Heart left ventricle (tissue), 16 donors: ENCODE measurements at regions of chr16 and their contacts with region 1.

Region 1: DNA sequence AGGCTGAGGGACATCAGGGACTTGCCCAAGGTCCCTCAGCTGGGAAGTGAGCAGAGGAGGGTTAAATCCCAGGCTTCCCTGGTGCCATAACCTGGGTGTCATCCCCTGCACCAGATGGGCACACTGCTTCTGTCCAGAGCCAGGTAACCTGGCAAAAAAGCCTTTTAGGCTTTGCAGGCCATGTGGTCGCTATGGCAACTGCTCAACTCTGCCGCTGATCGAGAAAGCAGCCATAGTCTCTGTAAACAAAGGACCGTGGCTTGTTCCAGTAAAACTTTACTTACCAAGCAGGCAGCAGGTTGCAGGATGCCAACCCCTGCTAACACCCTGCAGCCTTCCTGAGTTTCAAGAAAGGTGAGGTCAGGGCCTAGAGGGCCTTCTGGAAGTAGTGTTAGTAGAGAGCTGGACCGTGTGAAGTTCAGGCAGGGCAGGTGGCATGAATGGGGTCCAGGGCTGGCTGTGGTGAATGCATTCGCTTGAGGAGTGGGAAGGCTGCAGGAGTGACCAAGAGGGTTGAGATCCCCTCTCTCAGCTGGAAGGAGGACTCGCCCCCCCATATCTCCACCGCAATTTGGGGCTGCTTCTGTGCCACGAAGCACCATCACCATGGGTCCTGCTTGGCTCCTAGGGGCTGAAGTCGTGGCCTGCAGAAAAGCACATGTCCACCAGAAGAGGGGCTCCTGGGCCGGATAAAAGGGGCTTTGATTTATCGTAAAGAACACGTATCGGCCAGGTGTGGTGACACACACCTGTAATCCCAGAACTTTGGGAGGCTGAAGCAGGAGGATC is 91.3 kb downstream of the SOCS1 start:
- DNase-seq: peak in 1 of 5 donors; percentile 11
- ATAC-seq: no peak
- H3K4me3 ChIP-seq: no peak overlapping the region
- H3K27ac ChIP-seq: no peak overlapping the region
- H3K4me1 ChIP-seq: peaks cover 0 to 40% (median 22%) of the 10 kb centered on the region in 12 donors
- H3K27me3 ChIP-seq: no peaks in the 10 kb centered on the region
- CTCF ChIP-seq: no peak
- POLR2A ChIP-seq: no peak

Region 2: DNA sequence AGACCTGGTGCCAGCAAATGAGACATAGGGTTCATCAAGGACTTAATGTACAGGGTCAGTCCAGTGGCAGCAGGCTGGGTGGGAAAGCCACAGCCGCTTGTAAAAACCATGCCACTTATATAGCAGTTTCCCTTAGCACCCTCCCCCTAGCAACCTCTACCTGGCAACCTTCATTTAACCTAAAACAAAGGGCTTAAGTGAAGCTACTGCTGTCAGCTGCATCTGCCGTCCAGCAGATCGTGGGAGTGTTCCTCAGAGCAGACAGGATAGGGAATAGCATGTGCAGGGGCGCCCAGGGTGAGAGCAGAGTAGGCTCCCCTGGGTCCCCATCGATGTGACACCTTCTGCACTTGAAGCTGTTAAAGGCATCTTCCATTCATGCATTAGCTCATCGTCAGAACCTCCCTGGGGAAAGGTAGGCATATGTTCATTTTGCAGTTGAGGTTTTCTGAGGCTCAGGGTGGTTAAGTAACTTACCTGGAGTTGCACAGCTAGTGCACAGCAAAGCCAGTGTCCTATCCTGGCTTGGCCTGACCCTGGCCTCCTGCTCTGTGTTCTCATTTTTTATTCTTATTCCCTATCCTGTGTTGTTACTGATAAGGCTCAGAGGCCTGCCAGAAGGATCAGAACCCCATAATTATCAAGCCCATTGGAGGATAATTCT is 21.2 kb before region 1 on chr16:
- intact Hi-C with region 1: loop called in 1 of 10 experiments (anchors 2 kb)
- DNase-seq: no peak
- ATAC-seq: no peak
- H3K4me3 ChIP-seq: no peak overlapping the region
- H3K27ac ChIP-seq: no peak overlapping the region
- H3K4me1 ChIP-seq: peaks cover 0 to 59% (median 31%) of the 10 kb centered on the region in 12 donors
- H3K27me3 ChIP-seq: no peaks in the 10 kb centered on the region
- CTCF ChIP-seq: no peak
- POLR2A ChIP-seq: no peak

Region 3: DNA sequence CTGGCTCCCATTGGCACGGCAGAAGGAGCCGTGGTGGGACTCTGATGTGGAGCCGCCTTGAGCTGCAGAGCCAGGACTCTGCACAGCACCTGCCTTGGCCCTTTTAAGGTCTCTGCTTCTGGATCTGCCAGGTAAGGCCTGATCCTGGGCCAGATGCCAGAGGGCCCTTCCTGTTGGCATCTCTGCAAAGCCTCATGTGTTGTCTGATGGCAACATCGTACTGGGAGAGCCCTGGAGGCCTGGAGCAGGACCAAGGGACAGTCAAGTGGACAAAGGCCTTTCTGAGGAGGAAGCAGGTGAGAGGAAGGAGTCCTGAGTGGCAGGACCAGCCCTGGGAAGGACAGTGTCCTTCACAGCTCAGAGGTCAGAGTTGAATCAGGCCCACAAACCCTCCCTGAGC is 65.2 kb after region 1 on chr16:
- intact Hi-C with region 1: no loop called
- DNase-seq: no peak
- ATAC-seq: peak in 1 of 4 donors; percentile 31
- H3K4me3 ChIP-seq: no peak overlapping the region
- H3K27ac ChIP-seq: no peak overlapping the region
- H3K4me1 ChIP-seq: peaks cover 0 to 49% (median 7%) of the 10 kb centered on the region in 12 donors
- H3K27me3 ChIP-seq: peaks cover 0 to 3% (median 0%) of the 10 kb centered on the region in 9 donors
- CTCF ChIP-seq: no peak
- POLR2A ChIP-seq: no peak

Region 4: DNA sequence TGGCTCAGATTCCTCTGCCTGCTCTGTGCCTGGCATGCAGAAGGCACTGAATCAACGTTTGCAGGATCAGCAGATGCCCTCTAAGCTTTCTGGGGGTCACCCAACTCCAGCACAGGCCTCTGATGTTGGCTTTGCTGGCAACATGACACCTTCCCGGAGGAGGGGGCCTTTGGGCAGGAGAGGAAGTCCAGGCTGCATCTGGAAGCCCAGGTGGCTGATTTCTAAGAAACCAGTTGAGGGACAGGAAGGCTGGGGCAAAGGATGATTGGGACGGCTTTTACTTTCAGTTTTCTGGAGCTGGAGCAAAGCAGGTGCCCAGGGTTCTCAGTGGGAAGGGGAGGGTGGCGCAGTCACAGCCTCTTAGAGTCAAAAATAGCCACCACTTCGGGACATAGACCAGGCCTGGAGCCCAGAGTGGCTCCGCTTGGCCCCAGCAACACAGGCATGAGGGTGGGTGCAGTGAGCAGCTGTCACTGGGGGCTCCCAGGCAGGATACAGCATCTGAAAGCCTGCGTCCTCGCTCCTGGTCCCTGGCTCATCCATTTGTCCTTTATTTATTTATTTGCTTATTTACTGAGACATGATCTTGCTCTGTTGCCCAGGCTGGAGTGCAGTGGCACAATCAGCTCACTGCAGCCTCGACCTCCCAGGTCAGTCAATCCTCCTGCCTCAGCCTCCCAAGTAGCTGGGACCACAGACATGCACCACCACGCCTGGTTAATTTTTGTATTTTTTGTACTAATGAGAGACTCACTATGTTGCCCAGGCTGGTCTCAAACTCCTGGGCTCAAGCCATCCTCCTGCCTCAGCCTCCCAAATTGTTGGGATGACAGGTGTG is 76.2 kb after region 1 on chr16:
- intact Hi-C with region 1: loop called in 1 of 10 experiments (anchors 10 kb)
- DNase-seq: peak; percentile 48 to 74 (median 52)
- ATAC-seq: peak; percentile 93 to 96 (median 96)
- H3K4me3 ChIP-seq: peak overlapping the region in 3 of 12 donors; percentile 14 to 15 (median 15)
- H3K27ac ChIP-seq: peak overlapping the region; percentile 44 to 86 (median 76)
- H3K4me1 ChIP-seq: peaks cover 0 to 24% (median 0%) of the 10 kb centered on the region in 12 donors
- H3K27me3 ChIP-seq: no peaks in the 10 kb centered on the region
- CTCF ChIP-seq: no peak
- POLR2A ChIP-seq: no peak